Activated naive CD4-positive, alpha-beta T cell treated with anti-CD3 and anti-CD28 coated beads for 36 hours (primary cell): ENCODE measurements at regions of chr2 and their contacts with region 1.

Region 1: DNA sequence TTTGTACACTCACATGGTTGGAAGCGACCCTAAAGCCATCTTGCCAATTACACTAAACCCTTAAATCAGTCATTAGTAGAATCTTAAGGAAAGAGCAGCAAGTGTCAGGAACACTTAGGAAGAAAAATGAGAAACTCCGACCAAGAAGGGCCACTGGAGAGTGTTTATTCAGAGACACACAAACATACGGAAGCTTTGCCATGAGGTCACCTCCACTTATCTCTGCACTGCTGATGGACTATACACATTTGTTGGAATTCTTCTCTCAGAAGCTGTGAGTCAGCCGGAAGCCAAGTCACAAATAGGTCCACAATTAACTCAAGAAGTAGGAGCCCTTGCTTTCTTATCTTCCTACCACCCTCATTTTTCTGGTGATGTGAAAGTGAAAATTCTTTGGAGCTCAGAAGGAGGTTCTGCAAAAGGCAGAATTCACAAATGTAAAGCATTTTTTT is 21.6 kb downstream of the BMP10 start:
- DNase-seq: no peak
- H3K4me3 Mint-ChIP-seq: no peak overlapping the region
- H3K27ac Mint-ChIP-seq: no peak overlapping the region
- H3K4me1 Mint-ChIP-seq: no peaks in the 10 kb centered on the region
- H3K27me3 Mint-ChIP-seq: peaks cover 3% of the 10 kb centered on the region

Region 2: DNA sequence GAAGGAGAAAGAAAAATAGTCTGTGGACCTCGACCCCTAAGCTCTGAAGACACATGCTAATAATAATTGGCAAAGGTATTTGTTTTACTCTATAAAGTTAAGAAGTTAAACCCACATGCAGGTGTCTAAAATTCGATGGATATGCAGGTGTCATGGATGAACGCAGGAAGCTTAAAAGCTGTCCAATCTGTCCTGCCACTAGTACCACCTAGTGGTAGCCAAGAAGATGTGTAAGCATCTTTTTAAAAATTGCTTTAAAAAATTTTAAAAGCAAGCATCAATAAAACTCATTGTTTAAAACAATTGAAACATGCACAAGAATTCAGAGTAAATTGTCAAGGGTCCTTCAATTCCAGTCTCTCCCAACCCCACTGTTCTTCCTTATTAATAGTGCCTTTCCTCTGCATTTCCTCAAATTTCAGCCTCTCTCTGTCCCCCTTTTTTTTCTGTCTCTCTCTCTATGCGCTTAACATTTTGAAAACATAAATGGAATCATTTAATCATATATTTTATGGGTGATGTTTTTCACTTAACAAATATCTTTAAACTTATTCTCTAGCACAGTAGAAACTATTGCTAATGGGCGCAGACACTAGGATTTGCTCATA is 566.7 kb before region 1 on chr2:
- CTCF ChIA-PET with region 1: no interaction called
- intact Hi-C with region 1: no loop called
- DNase-seq: peak; percentile 18
- H3K4me3 Mint-ChIP-seq: no peak overlapping the region
- H3K27ac Mint-ChIP-seq: no peak overlapping the region
- H3K4me1 Mint-ChIP-seq: no peaks in the 10 kb centered on the region
- H3K27me3 Mint-ChIP-seq: peaks cover 2% of the 10 kb centered on the region

Region 3: GRCh38 chr2:68837164-68837860 is 12.3 kb before region 1 on chr2:
- CTCF ChIA-PET with region 1: interaction called, 20 read pairs
- intact Hi-C with region 1: no loop called
- DNase-seq: peak; percentile 85
- H3K4me3 Mint-ChIP-seq: no peak overlapping the region
- H3K27ac Mint-ChIP-seq: peak overlapping the region; percentile 61
- H3K4me1 Mint-ChIP-seq: peaks cover 34% of the 10 kb centered on the region
- H3K27me3 Mint-ChIP-seq: no peaks in the 10 kb centered on the region

Region 4: DNA sequence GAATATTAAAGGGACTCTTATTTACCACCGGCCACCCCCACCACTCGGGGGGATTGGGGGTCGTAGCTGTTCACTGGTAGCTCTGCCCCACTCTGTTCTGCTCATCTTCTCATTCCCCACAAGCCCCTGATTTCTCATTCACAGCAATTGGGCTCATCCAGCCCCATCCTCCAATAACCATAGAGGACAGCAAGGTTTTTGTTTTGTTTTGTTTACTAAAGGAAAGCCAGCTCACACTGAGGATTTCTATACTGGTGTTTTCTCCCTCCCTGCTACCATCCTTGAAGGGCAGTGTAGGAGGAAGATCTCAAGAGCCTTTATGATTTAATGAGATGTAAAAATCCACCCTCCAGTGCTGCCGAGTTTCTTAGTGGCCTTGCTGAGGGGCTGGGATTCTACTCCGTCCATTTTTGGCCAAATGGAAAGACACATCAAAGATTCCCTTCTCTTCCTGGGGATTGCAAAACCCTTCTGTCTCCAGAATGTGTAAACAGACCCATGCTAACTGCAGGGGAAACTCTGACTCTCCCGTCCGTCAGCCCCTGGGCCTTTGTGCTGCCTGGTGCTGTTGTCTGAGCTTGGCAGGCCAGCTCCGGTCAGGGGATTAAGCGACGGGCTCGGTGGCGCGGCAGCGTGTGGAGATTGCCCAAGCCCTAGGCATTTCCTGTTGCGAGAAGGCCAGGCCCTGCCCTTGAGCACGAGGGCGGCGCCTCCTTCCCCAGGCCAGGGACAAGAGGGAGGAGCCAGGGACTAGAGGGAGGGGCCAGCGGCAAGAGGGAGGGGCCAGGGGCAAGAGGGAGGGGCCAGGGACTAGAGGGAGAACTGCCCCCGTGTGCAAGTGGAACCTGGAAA is 328.4 kb after region 1 on chr2:
- CTCF ChIA-PET with region 1: no interaction called
- intact Hi-C with region 1: no loop called
- DNase-seq: peak; percentile 12
- H3K4me3 Mint-ChIP-seq: no peak overlapping the region
- H3K27ac Mint-ChIP-seq: no peak overlapping the region
- H3K4me1 Mint-ChIP-seq: peaks cover 4% of the 10 kb centered on the region
- H3K27me3 Mint-ChIP-seq: peaks cover 3% of the 10 kb centered on the region